ENCODE measurements at regions of chr6 and their contacts with region 1.

Region 1: DNA sequence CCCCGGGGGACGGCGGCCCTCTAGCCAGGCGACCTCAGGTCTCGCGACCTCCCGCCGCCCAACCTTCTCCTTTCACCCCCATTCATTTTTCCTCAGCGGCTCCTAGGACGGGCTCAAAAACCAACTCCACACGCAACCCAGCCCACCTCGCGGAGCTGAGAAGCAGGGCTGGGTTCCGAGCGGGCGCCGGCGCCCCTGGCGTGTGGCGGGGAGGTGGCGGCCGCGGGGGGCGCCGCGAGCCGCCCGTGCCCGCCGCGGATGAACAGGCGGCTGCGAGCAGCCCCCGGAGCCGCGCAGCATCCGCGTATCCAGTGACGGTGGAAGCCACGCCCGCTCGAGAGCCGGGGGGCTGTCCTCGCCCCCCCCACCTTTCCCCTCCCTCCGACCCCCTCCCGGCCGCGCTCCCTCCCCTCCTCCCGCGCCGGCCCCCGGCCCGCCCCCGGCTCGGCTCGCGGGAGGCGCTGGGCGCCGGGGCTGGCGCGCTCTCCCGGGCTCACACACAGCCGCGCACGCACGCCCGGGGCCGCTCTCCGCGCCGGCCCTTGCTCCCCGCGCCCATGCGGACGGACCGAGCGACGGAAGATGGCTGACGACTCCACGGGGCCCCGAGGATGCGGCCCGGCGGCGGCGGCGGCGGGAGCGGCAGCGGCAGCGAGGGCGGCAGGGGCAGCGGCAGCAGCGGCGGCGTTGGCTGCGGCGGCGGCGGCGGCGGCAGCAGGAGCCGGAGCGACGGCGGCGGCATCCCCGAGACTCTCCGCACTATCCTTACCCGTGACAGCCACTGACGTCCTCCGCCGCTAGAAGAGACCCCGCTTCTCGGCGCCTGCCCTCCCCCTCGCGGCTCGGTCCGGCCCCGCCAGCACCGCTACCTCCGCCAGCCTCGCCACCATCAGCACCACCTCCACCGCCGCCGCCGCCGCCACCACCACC is at the start of gene SOBP:
- DNase-seq: peak; percentile 89
- H3K4me3 ChIP-seq: peak within 1 kb of the TSS; percentile 77 to 86 (median 82)
- H3K27ac ChIP-seq: peak within 1 kb of the TSS; percentile 88 to 95 (median 92)
- H3K4me1 ChIP-seq: peaks cover 0 to 40% (median 25%) of the 10 kb centered on the region in 4 donors
- H3K27me3 ChIP-seq: peaks cover 0 to 6% (median 0%) of the 10 kb centered on the region in 3 donors
- CTCF ChIP-seq: no peak
- EP300 ChIP-seq: no peak
- POLR2A ChIP-seq: no peak
- total RNA-seq, gene SOBP: 16.8 to 38.5 (median 22.8) TPM

Region 2: GRCh38 chr6:107459283-107460082 is 30.4 kb before region 1 on chr6 and contains the start of gene PDSS2:
- intact Hi-C with region 1: loop called (anchors 2 kb)
- DNase-seq: peak; percentile 97
- H3K4me3 ChIP-seq: peak within 1 kb of the TSS; percentile 66 to 81 (median 72)
- H3K27ac ChIP-seq: peak within 1 kb of the TSS; percentile 81 to 89 (median 86)
- H3K4me1 ChIP-seq: peaks cover 0 to 13% (median 8%) of the 10 kb centered on the region in 4 donors
- H3K27me3 ChIP-seq: no peaks in the 10 kb centered on the region
- CTCF ChIP-seq: peak in 2 of 4 experiments; percentile 23
- EP300 ChIP-seq: no peak
- POLR2A ChIP-seq: peak in 1 of 2 donors; percentile 80
- total RNA-seq, gene PDSS2: 9.4 to 11.1 (median 9.6) TPM

Region 3: DNA sequence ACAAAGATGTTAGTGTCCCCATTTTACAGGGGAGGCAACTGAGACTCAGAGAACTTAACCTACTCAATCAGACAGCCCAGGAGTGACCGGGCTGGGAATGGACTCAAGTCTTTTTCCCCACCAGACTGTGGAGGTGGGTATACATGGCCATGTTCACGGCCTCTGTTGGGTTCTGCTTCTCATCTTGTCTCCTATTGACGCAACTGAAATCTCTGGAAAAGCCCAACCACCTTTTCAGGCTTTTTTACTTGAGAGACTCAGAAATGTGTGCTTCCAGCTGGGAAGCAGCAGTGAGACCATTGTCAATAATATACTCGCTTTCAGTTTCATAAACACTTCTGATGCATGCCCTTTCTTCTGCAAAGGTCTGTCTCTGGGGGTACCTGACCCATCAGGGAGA is 70.8 kb after region 1 on chr6:
- intact Hi-C with region 1: loop called (anchors 2 kb)
- DNase-seq: peak; percentile 68
- H3K4me3 ChIP-seq: no peak overlapping the region
- H3K27ac ChIP-seq: peak overlapping the region; percentile 54 to 79 (median 75)
- H3K4me1 ChIP-seq: peaks cover 0 to 41% (median 34%) of the 10 kb centered on the region in 4 donors
- H3K27me3 ChIP-seq: no peaks in the 10 kb centered on the region
- CTCF ChIP-seq: no peak
- EP300 ChIP-seq: no peak
- POLR2A ChIP-seq: no peak

Region 4: DNA sequence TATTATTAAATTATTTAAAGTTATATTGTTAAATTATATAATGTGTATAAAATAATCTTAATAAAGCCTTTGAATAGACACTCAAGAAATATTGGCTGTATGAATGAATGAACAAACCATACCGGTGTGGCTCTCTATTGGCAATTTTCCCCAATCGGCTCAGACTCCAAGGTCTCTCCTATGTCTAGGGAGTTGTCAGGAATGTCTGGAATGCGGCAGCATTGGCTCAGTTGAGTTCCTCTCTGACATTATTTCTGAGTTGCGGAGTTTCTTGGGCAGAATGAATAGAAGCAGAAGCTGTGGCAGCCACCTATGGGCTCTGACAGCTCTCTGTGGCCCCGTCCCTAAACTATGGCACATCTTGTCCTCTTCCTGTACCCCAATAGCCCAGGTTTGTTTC is 111.0 kb after region 1 on chr6:
- intact Hi-C with region 1: no loop called
- DNase-seq: no peak
- H3K4me3 ChIP-seq: no peak overlapping the region
- H3K27ac ChIP-seq: no peak overlapping the region
- H3K4me1 ChIP-seq: peaks cover 0 to 7% (median 3%) of the 10 kb centered on the region in 4 donors
- H3K27me3 ChIP-seq: no peaks in the 10 kb centered on the region
- CTCF ChIP-seq: no peak
- EP300 ChIP-seq: no peak
- POLR2A ChIP-seq: no peak

Region 5: DNA sequence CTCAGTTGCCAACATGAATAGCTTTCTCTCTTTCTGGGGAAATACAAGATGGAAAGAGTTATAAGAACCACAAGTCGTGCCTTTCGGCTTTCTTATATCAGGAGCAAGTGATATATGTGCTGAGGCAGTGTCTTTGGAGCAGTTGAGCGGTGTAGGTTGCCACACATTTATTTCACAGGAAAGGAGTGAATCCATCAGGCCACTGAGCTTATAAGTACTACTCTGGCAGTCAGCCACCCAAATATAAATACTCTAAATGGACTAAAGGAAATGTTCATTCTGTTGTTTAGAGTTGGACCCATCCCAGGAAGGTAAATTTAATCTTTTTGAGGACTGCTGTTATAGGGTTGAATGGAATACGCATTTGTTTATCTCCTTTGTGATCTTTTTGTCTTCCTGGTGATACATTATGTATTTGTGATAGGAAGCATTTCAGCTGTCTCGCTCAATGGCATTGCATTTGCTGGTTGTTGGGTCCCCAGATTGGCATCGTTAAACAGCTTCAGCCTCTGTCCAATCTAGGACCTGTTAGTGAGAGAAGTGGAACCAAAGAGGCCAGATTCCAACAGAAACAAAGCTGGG is 139.7 kb after region 1 on chr6:
- intact Hi-C with region 1: loop called (anchors 5 kb)
- DNase-seq: no peak
- H3K4me3 ChIP-seq: no peak overlapping the region
- H3K27ac ChIP-seq: peak overlapping the region in 3 of 4 donors; percentile 48 to 62 (median 58)
- H3K4me1 ChIP-seq: peaks cover 0 to 34% (median 28%) of the 10 kb centered on the region in 4 donors
- H3K27me3 ChIP-seq: peaks cover 0 to 8% (median 8%) of the 10 kb centered on the region in 3 donors
- CTCF ChIP-seq: no peak
- EP300 ChIP-seq: no peak
- POLR2A ChIP-seq: no peak

Region 6: GRCh38 chr6:107657755-107658461 is 168.0 kb after region 1 on chr6:
- intact Hi-C with region 1: loop called (anchors 5 kb)
- DNase-seq: peak; percentile 88
- H3K4me3 ChIP-seq: peak overlapping the region in 2 of 4 donors; percentile 4 to 20
- H3K27ac ChIP-seq: peak overlapping the region; percentile 18 to 74 (median 54)
- H3K4me1 ChIP-seq: peaks cover 0 to 22% (median 17%) of the 10 kb centered on the region in 4 donors
- H3K27me3 ChIP-seq: no peaks in the 10 kb centered on the region
- CTCF ChIP-seq: peak in 3 of 4 experiments; percentile 8 to 43 (median 20)
- EP300 ChIP-seq: no peak
- POLR2A ChIP-seq: no peak

Region 7: DNA sequence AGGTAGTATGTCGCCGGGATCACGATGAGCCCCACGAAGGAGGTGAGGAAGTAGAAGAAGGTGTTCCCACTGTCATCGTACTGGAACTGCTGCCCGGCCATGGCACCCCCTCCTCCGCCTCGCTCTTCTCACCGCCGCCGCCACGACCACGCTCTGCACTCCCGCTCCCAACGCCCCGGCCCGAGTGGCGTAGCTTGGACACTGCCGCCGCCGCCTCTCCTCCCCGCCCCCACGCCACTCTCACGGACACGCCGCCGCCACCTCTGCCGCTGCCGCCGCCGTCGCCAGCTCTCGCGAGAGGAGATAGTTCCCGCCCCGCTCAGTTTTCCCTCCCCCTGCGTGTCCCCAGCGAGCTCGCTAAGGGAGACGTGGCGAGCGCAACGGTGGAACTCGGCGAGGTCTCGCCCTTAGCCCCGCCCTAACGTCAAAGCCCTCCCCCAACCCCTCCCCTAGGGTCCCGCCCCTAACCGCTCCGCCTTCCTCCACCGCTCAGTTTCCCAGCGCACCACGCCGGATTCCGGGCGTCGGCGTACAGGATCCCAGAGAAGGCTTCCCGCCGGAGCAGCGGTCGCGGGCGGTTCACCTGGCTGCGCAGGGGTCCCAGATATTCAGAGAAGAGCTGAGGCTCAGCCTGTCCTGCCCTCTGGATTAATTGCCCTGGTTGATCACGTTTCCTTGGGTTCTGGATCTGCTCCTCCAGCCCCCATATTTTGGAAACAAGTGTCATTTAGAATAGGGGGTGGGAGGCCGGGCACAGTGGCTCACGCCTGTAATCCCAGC is 468.2 kb after region 1 on chr6 and contains the start of gene SEC63:
- intact Hi-C with region 1: loop called (anchors 5 kb)
- DNase-seq: peak; percentile 98
- H3K4me3 ChIP-seq: peak within 1 kb of the TSS; percentile 79 to 92 (median 90)
- H3K27ac ChIP-seq: peak within 1 kb of the TSS; percentile 87 to 95 (median 92)
- H3K4me1 ChIP-seq: peaks cover 0 to 32% (median 30%) of the 10 kb centered on the region in 4 donors
- H3K27me3 ChIP-seq: no peaks in the 10 kb centered on the region
- CTCF ChIP-seq: no peak
- EP300 ChIP-seq: no peak
- POLR2A ChIP-seq: peak; percentile 86 to 87
- total RNA-seq, gene SEC63: 31.7 to 44.9 (median 33.9) TPM